Posterior cingulate gyrus (tissue), 11 donors: ENCODE measurements at regions of chr1 and their contacts with region 1.

Region 1: GRCh38 chr1:17397910-17398695 is 26.1 kb downstream of the PADI6 start:
- DNase-seq: no peak

Region 2: GRCh38 chr1:17365293-17365692 is 32.8 kb before region 1 on chr1:
- intact Hi-C with region 1: loop called (anchors 2 kb)
- DNase-seq: no peak

Region 3: GRCh38 chr1:17494114-17494729 is 96.1 kb after region 1 on chr1:
- intact Hi-C with region 1: no loop called
- DNase-seq: peak; percentile 42 to 94 (median 70)

Region 4: DNA sequence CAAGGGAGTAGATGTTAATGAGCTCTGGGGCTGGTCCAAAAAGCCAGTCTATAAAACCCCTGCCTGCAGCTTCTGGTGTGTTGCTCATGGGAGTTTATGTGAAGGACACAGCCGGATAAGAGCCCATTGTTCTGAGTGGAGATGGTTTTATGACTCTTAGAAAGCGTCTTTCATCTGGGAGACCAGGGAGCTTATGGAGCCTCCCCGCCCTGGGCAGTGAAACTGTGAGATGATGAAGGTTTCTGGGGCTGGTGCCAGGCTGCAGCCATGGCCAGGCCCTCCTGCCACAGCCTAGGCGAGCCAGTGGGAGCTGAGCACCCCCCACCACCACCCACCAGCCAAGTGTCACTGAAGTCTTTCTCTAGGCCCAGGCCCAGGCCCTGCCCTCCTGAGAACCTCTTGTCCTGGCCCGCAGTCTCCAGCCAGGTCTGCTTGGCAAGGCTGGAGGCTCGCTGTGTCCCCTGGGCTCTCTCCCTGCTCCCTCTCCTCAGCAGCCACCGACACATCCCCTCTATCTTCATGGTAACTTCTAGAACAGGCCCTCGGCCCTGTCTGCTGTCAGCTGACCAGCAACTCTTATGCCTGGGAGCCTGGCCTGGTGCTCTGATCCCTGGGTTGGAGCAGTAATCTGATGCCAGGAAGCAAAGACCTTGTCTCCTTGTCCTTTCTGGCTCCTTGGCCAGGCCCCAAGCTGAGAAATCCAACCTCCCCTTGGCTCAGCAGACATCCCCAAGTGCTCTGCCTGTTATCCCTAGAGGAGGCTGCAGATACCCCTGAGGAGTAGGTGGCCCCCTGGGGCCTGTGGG is 133.8 kb after region 1 on chr1:
- intact Hi-C with region 1: no loop called
- DNase-seq: peak; percentile 29 to 93 (median 60)